ENCODE measurements at regions of chrX and their contacts with region 1.

Region 1: GRCh38 chrX:45710081-45710801 is 509.6 kb upstream of the DIPK2B start:
- DNase-seq: peak; percentile 79
- H3K4me3 ChIP-seq: no peak overlapping the region
- CTCF ChIP-seq: no peak

Region 2: DNA sequence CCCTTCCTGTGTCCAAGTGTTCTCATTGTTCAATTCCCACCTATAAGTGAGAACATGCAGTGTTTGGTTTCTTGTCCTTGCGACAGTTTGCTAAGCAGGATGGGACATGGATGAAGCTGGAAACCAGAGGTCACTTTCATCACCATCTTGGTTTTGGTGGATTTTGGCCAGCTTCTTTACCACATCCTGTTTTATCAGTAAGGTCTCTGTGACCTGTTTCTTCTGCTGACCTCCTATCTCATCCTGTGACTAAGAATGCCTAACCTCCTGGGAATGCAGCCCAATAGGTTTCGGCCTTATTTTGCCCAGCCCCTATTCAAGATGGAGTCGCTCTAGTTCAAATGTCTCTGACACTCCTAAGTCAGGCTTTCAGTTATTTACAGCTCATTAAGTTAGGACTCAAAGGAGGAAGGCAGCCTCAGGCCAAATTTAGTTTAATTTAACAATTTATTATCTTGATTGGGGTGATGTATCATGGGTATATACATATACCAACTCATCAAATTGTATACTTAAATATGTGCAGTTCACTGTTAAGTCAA is 1567.1 kb before region 1 on chrX:
- CTCF ChIA-PET with region 1: no interaction called
- POLR2A ChIA-PET with region 1: no interaction called
- DNase-seq: no peak
- H3K4me3 ChIP-seq: no peak overlapping the region
- CTCF ChIP-seq: no peak

Region 3: DNA sequence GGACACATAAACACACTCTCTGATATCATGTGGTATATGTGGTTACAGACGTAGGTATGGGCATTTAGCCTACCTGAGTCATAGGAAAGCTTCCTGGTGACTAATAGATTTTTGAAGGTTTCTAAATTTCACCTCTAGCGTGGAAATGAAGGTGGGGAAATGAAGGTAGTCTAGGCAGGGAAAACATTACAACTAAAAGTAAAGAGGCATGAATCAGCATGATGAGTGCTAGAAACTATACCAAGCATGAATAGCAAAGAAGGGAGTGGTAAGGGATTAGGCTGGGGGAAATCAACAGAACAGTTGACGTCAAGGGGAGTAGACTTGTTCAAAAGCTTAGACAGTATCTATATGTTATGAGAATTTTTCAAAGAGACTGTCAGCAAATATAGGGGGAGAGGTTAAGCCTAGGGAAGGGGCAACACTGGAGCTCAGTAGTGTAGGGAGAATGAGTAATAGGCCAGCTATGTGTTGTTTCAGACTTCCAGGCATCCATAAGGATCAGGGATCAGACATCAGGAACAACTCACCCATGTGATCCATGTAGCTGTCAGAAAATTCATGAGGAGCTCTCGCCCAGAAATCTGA is 230.3 kb before region 1 on chrX:
- CTCF ChIA-PET with region 1: no interaction called
- POLR2A ChIA-PET with region 1: interaction called, 18 read pairs
- DNase-seq: peak; percentile 86
- H3K4me3 ChIP-seq: no peak overlapping the region
- CTCF ChIP-seq: no peak

Region 4: DNA sequence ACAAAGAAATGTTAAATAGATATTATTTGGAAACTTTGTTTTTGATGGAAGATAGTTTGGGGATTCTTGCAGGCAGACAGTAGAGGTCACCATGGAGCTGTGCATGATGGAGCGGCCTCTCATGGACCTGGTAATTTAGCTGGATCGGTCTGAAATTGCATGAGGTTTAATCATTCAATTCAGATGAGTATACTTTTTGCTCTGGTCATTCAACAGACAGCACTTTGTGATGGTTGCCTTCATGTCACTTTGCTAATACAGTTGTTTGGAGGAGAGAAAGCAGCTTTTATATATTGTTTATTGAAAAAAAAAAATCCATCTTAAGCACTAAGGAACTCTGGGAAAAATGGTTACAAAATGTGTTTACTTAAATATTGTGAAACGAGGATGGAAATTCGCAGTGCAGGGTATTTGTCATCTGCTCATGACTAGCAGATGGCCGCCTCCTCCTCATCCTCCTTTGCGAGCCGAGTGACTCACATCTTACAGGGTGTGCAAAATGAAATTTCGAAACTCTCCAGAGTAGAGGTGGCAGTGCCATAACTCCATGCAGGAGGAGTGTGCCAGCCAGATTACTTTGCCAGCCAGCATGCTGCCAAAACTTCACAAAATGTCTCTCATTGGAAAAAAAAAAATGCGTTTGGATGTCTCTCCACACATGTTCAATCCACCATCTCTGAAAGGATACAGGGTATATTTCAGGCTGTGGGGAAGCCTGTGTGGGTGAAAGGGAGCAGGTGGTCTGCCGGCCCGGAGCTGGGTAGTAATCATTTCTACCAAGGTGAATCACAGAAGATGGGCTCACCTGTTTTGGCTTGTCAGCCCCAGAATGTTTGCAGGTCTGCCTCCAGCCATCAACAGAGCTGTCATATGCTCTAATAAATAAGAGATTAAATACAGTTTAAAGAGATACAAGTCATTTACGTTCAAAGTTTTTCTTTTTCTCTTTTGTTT is 194.7 kb before region 1 on chrX:
- CTCF ChIA-PET with region 1: interaction called, 3 read pairs
- POLR2A ChIA-PET with region 1: interaction called, 27 read pairs
- DNase-seq: peak; percentile 74
- H3K4me3 ChIP-seq: no peak overlapping the region
- CTCF ChIP-seq: peak; percentile 50

Region 5: GRCh38 chrX:45621376-45622041 is 88.7 kb before region 1 on chrX:
- CTCF ChIA-PET with region 1: no interaction called
- POLR2A ChIA-PET with region 1: interaction called, 22 read pairs
- DNase-seq: peak; percentile 24
- H3K4me3 ChIP-seq: no peak overlapping the region
- CTCF ChIP-seq: no peak

Region 6: GRCh38 chrX:45668686-45669443 is 41.4 kb before region 1 on chrX:
- CTCF ChIA-PET with region 1: no interaction called
- POLR2A ChIA-PET with region 1: interaction called, 24 read pairs
- DNase-seq: peak; percentile 79
- H3K4me3 ChIP-seq: no peak overlapping the region
- CTCF ChIP-seq: no peak

Region 7: GRCh38 chrX:45697591-45697990 is 12.7 kb before region 1 on chrX:
- CTCF ChIA-PET with region 1: no interaction called
- POLR2A ChIA-PET with region 1: interaction called, 16 read pairs
- DNase-seq: no peak
- H3K4me3 ChIP-seq: no peak overlapping the region
- CTCF ChIP-seq: no peak

Region 8: GRCh38 chrX:45769761-45770582 is 59.7 kb after region 1 on chrX:
- CTCF ChIA-PET with region 1: no interaction called
- POLR2A ChIA-PET with region 1: interaction called, 27 read pairs
- DNase-seq: no peak
- H3K4me3 ChIP-seq: peak overlapping the region; percentile 65
- CTCF ChIP-seq: no peak

Region 9: DNA sequence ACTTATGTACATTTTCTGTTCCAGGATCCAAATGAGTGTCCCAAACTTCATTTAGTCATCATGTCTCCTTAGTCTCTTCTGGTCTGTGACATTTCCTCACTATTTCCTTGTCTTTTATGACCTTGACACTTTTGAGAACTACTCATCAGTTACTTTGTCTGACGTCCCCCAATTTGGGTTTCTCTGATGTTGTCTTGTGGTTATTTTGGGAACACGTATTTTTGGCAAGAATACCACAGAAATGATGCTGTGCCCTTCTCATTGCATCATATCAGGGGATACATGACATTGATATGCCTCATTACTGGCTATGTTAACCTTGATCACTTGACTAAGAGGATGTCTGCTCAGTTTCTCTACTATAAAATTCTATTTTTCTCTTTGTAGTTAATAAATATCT is 526.2 kb after region 1 on chrX:
- CTCF ChIA-PET with region 1: no interaction called
- POLR2A ChIA-PET with region 1: no interaction called
- DNase-seq: no peak
- H3K4me3 ChIP-seq: no peak overlapping the region
- CTCF ChIP-seq: no peak